ENCODE measurements at regions of chr5 and their contacts with region 1.

Region 1: DNA sequence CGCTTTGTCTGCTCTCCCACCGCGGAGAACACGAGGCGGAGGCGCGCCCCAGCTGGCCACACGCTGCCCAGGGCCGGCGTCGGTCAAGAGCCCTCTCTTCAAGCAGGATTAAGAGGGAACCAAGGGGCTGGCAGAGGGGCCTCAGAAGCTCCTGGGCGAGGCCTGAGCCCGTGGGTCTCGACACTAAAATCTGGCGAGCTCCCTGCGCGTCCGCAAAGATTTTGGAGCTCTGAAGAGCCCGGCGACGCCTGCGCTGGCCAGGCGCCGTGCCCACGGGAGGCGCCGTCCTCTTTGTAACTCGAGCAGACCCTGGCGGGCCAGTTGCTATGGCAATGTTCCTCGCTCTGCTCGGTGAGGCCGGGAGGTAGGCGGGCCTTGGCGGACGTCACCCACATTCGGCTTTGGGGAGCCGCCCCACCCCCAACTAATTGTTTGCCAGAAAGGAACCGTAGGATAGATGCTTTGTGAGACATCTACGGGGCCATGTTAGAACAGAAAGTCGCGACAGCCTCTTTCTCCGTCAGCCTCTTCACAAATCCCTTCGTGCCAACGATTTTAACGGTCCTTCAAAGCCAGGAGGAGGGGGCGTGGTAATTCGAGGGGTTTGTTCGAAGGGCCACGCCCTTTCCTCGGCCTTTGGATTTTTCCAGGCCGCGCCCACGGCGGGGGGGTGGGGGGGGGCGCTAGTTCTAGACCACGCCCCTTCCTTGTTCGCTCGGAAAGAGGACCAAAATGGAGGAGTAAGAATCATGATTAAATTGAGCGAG is 714 bp upstream of the CNOT8 start:
- DNase-seq: peak; percentile 77 to 96 (median 86)
- ATAC-seq: peak; percentile 53
- H3K4me3 ChIP-seq: peak overlapping the region; percentile 73
- H3K4me3 Mint-ChIP-seq: peak overlapping the region; percentile 92
- H3K27ac ChIP-seq: peak overlapping the region; percentile 96 to 98
- H3K27ac Mint-ChIP-seq: peak overlapping the region; percentile 98
- H3K4me1 ChIP-seq: peaks cover 28% of the 10 kb centered on the region
- H3K4me1 Mint-ChIP-seq: peaks cover 46% of the 10 kb centered on the region
- H3K27me3 ChIP-seq: no peaks in the 10 kb centered on the region
- H3K27me3 Mint-ChIP-seq: no peaks in the 10 kb centered on the region
- CTCF ChIP-seq: no peak

Region 2: GRCh38 chr5:154038707-154039457 is 818.8 kb before region 1 on chr5 and contains the starts of genes FAM114A2 and MFAP3:
- CTCF ChIA-PET with region 1: no interaction called
- POLR2A ChIA-PET with region 1: interaction called, 4 read pairs
- intact Hi-C with region 1: loop called in 1 of 2 experiments (anchors 5 kb)
- DNase-seq: peak; percentile 80 to 94 (median 85)
- ATAC-seq: peak; percentile 96
- H3K4me3 ChIP-seq: peak within 1 kb of the TSS; percentile 92
- H3K4me3 Mint-ChIP-seq: peak within 1 kb of the TSS; percentile 99
- H3K27ac ChIP-seq: peak within 1 kb of the TSS; percentile 69 to 91
- H3K27ac Mint-ChIP-seq: peak within 1 kb of the TSS; percentile 98
- H3K4me1 ChIP-seq: peaks cover 13% of the 10 kb centered on the region
- H3K4me1 Mint-ChIP-seq: peaks cover 72% of the 10 kb centered on the region
- H3K27me3 ChIP-seq: no peaks in the 10 kb centered on the region
- H3K27me3 Mint-ChIP-seq: no peaks in the 10 kb centered on the region
- CTCF ChIP-seq: no peak
- total RNA-seq, gene FAM114A2: 21.9 to 23.3 TPM
- total RNA-seq, gene MFAP3: 14.9 to 17.7 TPM

Region 3: GRCh38 chr5:154654486-154655371 is 203.0 kb before region 1 on chr5:
- CTCF ChIA-PET with region 1: interaction called, 5 read pairs
- POLR2A ChIA-PET with region 1: interaction called, 4 read pairs
- intact Hi-C with region 1: loop called in 1 of 2 experiments (anchors 5 kb)
- DNase-seq: no peak
- ATAC-seq: no peak
- H3K4me3 ChIP-seq: no peak overlapping the region
- H3K4me3 Mint-ChIP-seq: no peak overlapping the region
- H3K27ac ChIP-seq: no peak overlapping the region
- H3K27ac Mint-ChIP-seq: no peak overlapping the region
- H3K4me1 ChIP-seq: peaks cover 9% of the 10 kb centered on the region
- H3K4me1 Mint-ChIP-seq: peaks cover 10% of the 10 kb centered on the region
- H3K27me3 ChIP-seq: no peaks in the 10 kb centered on the region
- H3K27me3 Mint-ChIP-seq: peaks cover 5% of the 10 kb centered on the region
- CTCF ChIP-seq: no peak

Region 4: DNA sequence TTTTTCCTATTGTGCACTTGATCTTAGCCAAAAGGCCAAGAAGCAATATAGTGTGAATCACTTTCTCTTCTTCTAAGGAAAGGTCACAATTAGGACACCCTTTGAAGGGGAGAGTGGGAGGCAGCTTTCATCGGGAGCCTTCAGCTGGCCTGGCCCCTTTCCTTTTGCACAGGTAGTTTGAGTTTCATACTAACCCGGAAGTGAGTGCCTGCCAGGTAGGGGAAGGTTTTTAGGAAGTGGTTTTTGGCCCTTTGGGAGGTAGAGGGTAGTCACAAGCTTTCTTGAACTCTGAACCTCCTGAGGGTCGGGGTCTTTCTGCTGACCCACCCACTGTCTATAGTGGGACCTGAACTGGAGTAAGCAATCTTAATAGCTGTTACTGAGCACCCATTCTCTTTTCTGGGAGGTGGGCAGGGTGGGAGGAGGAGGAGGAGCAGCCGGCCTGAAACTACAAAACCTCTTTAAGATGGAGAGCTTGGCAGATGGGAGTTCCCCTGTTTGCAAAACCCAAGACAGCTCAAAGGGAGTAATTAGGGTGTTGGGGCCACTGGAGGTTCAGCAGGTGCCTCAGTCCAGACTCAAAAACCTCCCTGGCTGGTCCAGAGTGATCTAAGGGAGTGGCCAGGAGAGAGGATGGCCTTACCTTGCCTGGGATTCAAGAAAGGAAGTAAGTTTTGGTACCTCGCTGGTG is 96.5 kb before region 1 on chr5:
- CTCF ChIA-PET with region 1: no interaction called
- POLR2A ChIA-PET with region 1: interaction called, 17 read pairs
- intact Hi-C with region 1: no loop called
- DNase-seq: peak in 4 of 14 experiments; percentile 39 to 62 (median 58)
- ATAC-seq: peak; percentile 21
- H3K4me3 ChIP-seq: no peak overlapping the region
- H3K4me3 Mint-ChIP-seq: peak overlapping the region; percentile 64
- H3K27ac ChIP-seq: peak overlapping the region; percentile 38 to 51
- H3K27ac Mint-ChIP-seq: peak overlapping the region; percentile 91
- H3K4me1 ChIP-seq: peaks cover 72% of the 10 kb centered on the region
- H3K4me1 Mint-ChIP-seq: peaks cover 76% of the 10 kb centered on the region
- H3K27me3 ChIP-seq: no peaks in the 10 kb centered on the region
- H3K27me3 Mint-ChIP-seq: no peaks in the 10 kb centered on the region
- CTCF ChIP-seq: no peak

Region 5: GRCh38 chr5:154829589-154830218 is 28.0 kb before region 1 on chr5:
- CTCF ChIA-PET with region 1: no interaction called
- POLR2A ChIA-PET with region 1: interaction called, 16 read pairs
- intact Hi-C with region 1: no loop called
- DNase-seq: peak in 12 of 14 experiments; percentile 6 to 70 (median 30)
- ATAC-seq: peak; percentile 76
- H3K4me3 ChIP-seq: peak overlapping the region; percentile 6
- H3K4me3 Mint-ChIP-seq: peak overlapping the region; percentile 68
- H3K27ac ChIP-seq: peak overlapping the region; percentile 63 to 82
- H3K27ac Mint-ChIP-seq: peak overlapping the region; percentile 93
- H3K4me1 ChIP-seq: peaks cover 37% of the 10 kb centered on the region
- H3K4me1 Mint-ChIP-seq: peaks cover 56% of the 10 kb centered on the region
- H3K27me3 ChIP-seq: no peaks in the 10 kb centered on the region
- H3K27me3 Mint-ChIP-seq: no peaks in the 10 kb centered on the region
- CTCF ChIP-seq: no peak